Head of caudate nucleus (tissue), 42 donors: ENCODE measurements at regions of chr12 and their contacts with region 1.

Region 1: DNA sequence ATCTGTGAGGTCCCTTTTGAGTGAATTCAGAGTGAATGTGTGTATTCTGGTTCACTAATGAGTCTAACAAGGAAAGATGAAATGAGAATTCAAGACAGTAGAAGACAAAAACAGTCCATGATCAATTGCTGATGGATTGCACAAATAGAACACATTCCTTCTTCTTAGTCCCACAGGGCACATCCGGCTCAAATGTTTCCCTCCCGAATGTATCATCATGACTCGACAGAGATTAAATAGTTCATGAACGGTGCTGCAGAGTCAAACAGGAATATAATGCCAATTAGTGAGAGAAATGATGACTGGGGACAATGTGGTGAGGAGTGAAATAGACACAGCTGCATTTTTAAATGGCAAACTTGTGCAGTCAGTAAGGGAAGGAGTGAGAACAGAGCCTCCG is 11.5 kb upstream of the SFSWAP start:
- DNase-seq: no peak

Region 2: DNA sequence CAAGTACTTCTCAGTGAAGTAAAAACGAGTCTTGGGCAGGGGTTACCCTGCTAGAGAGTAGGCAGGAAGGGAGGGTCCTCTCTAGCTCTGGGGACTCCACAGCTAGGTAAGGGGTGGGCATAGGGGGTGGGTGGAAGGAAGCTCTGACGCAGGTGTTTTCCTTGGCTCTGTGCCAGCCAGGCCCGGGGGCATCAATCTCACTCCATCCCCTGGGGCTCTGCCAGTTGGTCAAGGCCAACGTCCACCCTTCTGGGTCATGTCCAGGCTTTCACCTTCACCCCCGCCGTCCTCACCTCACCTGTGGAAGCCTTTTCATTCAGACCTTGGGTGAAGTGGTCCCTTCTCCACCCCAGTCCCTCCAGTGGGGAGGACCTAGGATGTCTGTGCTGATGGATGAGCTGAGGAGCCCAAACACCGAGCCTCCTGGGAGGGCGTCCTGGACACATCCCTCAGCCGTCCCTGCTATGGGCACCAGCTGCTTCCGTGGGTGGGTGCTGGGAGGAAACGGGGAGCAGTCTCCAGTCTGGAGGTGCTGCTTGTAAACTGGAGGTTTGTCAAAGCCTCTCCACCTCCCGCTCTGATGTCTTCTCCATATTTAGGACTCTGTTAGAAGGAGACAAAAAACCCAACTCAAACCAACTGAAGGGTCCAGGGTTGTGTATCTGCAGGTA is 60.0 kb before region 1 on chr12:
- intact Hi-C with region 1: loop called (anchors 10 kb)
- DNase-seq: peak in 1 of 42 donors; percentile 29

Region 3: DNA sequence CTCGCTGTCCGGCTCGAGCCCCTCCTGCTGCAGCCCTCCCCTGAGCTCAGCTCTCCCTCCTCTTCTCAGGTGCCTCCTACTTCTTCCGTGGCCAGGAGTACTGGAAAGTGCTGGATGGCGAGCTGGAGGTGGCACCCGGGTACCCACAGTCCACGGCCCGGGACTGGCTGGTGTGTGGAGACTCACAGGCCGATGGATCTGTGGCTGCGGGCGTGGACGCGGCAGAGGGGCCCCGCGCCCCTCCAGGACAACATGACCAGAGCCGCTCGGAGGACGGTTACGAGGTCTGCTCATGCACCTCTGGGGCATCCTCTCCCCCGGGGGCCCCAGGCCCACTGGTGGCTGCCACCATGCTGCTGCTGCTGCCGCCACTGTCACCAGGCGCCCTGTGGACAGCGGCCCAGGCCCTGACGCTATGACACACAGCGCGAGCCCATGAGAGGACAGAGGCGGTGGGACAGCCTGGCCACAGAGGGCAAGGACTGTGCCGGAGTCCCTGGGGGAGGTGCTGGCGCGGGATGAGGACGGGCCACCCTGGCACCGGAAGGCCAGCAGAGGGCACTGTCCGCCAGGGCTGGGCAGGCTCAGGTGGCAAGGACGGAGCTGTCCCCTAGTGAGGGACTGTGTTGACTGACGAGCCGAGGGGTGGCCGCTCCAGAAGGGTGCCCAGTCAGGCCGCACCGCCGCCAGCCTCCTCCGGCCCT is 151.6 kb after region 1 on chr12:
- intact Hi-C with region 1: no loop called
- DNase-seq: peak in 10 of 42 donors; percentile 41 to 78 (median 56)